ENCODE measurements at regions of chr12 and their contacts with region 1.

Region 1: DNA sequence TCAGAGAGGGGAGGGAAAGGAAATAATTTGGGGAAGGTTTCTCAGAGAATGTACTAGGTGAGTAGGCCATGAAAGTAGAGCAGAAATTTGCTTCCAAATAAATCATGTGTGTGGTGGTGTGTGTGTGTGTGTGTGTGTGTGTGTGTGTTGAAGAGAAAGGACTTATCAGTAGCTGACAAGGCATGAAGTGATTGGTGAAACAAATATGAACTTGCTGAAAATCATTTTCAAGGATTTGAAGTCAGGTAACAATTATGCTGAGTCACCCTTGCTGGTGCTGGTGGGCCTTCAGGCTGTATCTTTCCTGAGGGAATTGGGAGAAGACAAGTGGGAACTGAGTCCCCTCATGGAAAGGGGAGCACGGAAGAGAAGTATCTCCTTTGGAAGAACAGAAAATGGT is 55.5 kb downstream of the HSD17B6 start:
- DNase-seq: no peak
- ATAC-seq: no peak
- H3K4me3 ChIP-seq: no peak overlapping the region
- H3K27ac ChIP-seq: no peak overlapping the region
- H3K4me1 ChIP-seq: no peaks in the 10 kb centered on the region
- H3K27me3 ChIP-seq: no peaks in the 10 kb centered on the region; a peak in 1 of 5 replicates
- CTCF ChIP-seq: no peak
- EP300 ChIP-seq: no peak
- POLR2A ChIP-seq: no peak
- RAD21 ChIP-seq: no peak

Region 2: GRCh38 chr12:56448860-56449621 is 369.6 kb before region 1 on chr12 and contains the start of gene TIMELESS:
- CTCF ChIA-PET with region 1: no interaction called
- POLR2A ChIA-PET with region 1: no interaction called
- in situ Hi-C with region 1: no loop called
- intact Hi-C with region 1: no loop called
- DNase-seq: peak; percentile 82
- ATAC-seq: peak; percentile 96
- H3K4me3 ChIP-seq: peak within 1 kb of the TSS; percentile 68 to 96 (median 77)
- H3K27ac ChIP-seq: peak within 1 kb of the TSS; percentile 92
- H3K4me1 ChIP-seq: peaks cover 24% of the 10 kb centered on the region
- H3K27me3 ChIP-seq: no peaks in the 10 kb centered on the region
- CTCF ChIP-seq: peak; percentile 45
- EP300 ChIP-seq: no peak
- POLR2A ChIP-seq: peak; percentile 61 to 82
- RAD21 ChIP-seq: peak; percentile 47
- total RNA-seq, gene TIMELESS: 20.3 and 25.6 TPM in 2 replicates

Region 3: DNA sequence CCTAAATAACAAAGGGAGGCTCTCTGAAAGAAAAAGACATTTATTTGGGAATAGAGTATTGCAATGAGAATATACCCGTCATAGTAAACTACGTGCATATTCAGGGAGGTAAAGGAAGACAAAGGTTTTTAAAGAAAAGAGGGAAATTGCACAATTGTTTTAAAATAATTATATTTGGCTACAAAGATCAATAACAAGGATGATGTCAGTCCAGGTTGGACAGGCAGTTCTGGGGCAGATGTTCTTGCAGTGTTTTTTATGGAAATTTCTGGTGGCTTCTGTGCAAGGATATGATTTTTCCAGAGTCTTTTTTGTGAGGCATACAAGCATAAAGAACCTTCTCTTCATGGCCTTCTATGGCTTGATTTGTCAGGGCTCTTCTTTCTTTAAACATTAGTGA is 26.0 kb before region 1 on chr12:
- CTCF ChIA-PET with region 1: no interaction called
- POLR2A ChIA-PET with region 1: no interaction called
- in situ Hi-C with region 1: no loop called
- intact Hi-C with region 1: loop called (anchors 1 kb)
- DNase-seq: no peak
- ATAC-seq: no peak
- H3K4me3 ChIP-seq: no peak overlapping the region
- H3K27ac ChIP-seq: no peak overlapping the region
- H3K4me1 ChIP-seq: no peaks in the 10 kb centered on the region; the same call in 1 of the 2 replicates
- H3K27me3 ChIP-seq: no peaks in the 10 kb centered on the region; a peak in 1 of 5 replicates
- CTCF ChIP-seq: no peak
- EP300 ChIP-seq: no peak
- POLR2A ChIP-seq: no peak
- RAD21 ChIP-seq: no peak